Dendritic cell treated with granulocyte-macrophage colony-stimulating factor and Interleukin-4, amounts not matched to agents 40 ng/mL and 50 ng/mL, for 4 days (primary cell): ENCODE measurements at regions of chr2 and their contacts with region 1.

Region 1: DNA sequence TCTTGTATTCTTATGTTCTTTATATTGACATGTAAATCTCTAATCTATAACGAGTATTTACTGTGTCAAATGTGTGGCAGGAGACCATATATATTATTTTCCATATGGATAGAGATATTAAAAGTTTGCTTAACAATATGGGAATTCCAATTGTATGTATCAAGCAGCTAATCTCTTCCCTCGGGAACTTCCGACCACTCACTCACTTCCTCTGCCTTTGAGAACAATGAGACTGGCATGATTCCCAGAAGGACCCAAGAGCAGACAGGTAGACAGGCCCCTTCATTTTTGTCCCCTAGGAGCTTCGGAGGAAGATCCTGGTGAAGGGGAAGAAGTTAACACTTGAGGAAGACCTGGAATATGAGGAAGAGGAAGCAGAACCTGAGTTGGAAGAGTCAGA is 24.1 kb downstream of the PLCD4 start:
- H3K4me3 Mint-ChIP-seq: no peak overlapping the region
- H3K27ac Mint-ChIP-seq: no peak overlapping the region
- H3K4me1 Mint-ChIP-seq: no peaks in the 10 kb centered on the region
- H3K27me3 Mint-ChIP-seq: no peaks in the 10 kb centered on the region

Region 2: GRCh38 chr2:218418717-218419458 is 212.9 kb before region 1 on chr2 and contains the start of gene VIL1:
- intact Hi-C with region 1: loop called (anchors 10 kb)
- H3K4me3 Mint-ChIP-seq: no peak within 1 kb of the TSS
- H3K27ac Mint-ChIP-seq: no peak within 1 kb of the TSS
- H3K4me1 Mint-ChIP-seq: peaks cover 8% of the 10 kb centered on the region
- H3K27me3 Mint-ChIP-seq: no peaks in the 10 kb centered on the region

Region 3: DNA sequence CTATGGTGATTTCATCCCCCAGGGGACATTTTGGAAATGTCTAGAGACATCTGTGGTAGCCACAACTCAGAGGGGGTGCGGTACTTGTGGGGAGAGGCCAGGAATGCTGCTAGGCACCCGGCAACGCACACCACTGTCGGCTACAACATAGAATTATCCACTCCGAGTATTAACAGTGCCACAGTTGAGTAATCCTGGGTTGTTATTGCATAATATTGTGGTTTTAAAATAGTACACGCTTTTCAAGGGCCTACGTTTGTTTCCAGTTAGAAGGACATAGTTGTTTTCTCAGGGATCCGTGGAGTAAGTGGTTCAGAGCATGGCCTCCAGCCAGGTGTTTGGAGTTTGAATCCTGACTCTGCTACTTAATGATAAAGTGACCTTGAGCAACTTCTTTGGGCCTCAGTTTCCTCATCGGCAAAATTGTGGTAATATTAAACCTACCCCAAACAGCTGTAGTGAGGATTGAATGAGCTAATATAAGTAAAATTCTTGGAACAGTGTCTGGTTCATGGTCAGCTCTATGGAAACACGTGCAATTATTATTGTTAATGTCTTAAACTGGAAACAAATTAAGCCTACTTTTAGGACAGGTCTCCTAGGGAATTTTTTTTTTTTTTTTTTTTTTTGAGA is 174.6 kb after region 1 on chr2:
- intact Hi-C with region 1: no loop called
- H3K4me3 Mint-ChIP-seq: no peak overlapping the region
- H3K27ac Mint-ChIP-seq: peak overlapping the region; percentile 67
- H3K4me1 Mint-ChIP-seq: peaks cover 28% of the 10 kb centered on the region
- H3K27me3 Mint-ChIP-seq: peaks cover 2% of the 10 kb centered on the region